ENCODE measurements at regions of chr17 and their contacts with region 1.

Region 1: GRCh38 chr17:40362696-40363110 is 1.8 kb downstream of the GJD3 start:
- DNase-seq: peak; percentile 68
- H3K4me3 ChIP-seq: peak overlapping the region in 2 of 3 experiments; percentile 53 to 55
- H3K27ac ChIP-seq: no peak overlapping the region
- H3K4me1 ChIP-seq: peaks cover 8% of the 10 kb centered on the region
- H3K27me3 ChIP-seq: no peaks in the 10 kb centered on the region
- CTCF ChIP-seq: peak; percentile 63 to 84

Region 2: GRCh38 chr17:38967290-38967738 is 1395.4 kb before region 1 on chr17 and contains the start of gene FBXO47:
- CTCF ChIA-PET with region 1: no interaction called
- dilution Hi-C with region 1: no loop called
- in situ Hi-C with region 1: no loop called
- intact Hi-C with region 1: no loop called
- DNase-seq: peak; percentile 82
- H3K4me3 ChIP-seq: peak within 1 kb of the TSS in 1 of 3 experiments; percentile 2
- H3K27ac ChIP-seq: no peak within 1 kb of the TSS
- H3K4me1 ChIP-seq: no peaks in the 10 kb centered on the region
- H3K27me3 ChIP-seq: no peaks in the 10 kb centered on the region
- CTCF ChIP-seq: no peak
- total RNA-seq, gene FBXO47: not detected

Region 3: GRCh38 chr17:40203131-40203530 is 159.6 kb before region 1 on chr17:
- CTCF ChIA-PET with region 1: no interaction called
- dilution Hi-C with region 1: no loop called
- in situ Hi-C with region 1: loop called in 1 of 2 experiments (anchors 10 kb)
- intact Hi-C with region 1: loop called (anchors 5 kb)
- DNase-seq: no peak
- H3K4me3 ChIP-seq: no peak overlapping the region
- H3K27ac ChIP-seq: no peak overlapping the region
- H3K4me1 ChIP-seq: no peaks in the 10 kb centered on the region
- H3K27me3 ChIP-seq: no peaks in the 10 kb centered on the region
- CTCF ChIP-seq: no peak

Region 4: DNA sequence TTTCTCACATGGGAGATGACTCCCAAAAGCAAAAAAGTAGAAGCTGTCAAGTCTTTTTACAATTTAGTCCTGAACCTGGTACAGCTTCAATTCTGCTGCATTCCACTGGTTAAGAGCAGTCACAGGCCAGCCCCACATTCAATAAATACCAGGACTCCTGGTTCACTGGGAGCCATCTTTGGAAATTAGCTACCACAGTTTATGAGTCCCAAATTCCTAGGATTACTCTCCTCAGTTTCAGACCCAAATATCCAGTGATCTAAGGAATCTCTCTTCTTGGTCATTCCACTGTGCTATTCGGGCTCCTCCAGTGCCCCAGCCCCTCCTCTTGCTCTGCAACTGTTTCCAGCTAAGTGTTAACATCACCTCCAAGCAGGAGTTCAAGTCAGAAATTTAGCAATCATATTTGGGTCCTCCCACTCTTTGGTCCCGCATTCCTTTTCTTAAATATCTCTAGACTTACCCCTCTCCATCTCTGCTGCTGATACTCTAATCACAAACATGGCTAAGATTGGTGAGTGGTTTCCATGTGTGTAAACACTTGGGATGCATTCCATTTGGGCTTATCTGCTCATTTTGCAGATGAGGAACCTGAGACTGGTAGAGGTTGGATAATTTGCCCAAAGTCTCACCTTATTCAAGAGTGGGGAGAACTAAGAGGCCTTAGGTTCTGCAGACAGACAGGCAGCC is 153.2 kb before region 1 on chr17:
- CTCF ChIA-PET with region 1: no interaction called
- dilution Hi-C with region 1: no loop called
- in situ Hi-C with region 1: loop called in 1 of 2 experiments (anchors 10 kb)
- intact Hi-C with region 1: loop called (anchors 5 kb)
- DNase-seq: no peak
- H3K4me3 ChIP-seq: no peak overlapping the region
- H3K27ac ChIP-seq: no peak overlapping the region
- H3K4me1 ChIP-seq: no peaks in the 10 kb centered on the region
- H3K27me3 ChIP-seq: no peaks in the 10 kb centered on the region
- CTCF ChIP-seq: no peak

Region 5: DNA sequence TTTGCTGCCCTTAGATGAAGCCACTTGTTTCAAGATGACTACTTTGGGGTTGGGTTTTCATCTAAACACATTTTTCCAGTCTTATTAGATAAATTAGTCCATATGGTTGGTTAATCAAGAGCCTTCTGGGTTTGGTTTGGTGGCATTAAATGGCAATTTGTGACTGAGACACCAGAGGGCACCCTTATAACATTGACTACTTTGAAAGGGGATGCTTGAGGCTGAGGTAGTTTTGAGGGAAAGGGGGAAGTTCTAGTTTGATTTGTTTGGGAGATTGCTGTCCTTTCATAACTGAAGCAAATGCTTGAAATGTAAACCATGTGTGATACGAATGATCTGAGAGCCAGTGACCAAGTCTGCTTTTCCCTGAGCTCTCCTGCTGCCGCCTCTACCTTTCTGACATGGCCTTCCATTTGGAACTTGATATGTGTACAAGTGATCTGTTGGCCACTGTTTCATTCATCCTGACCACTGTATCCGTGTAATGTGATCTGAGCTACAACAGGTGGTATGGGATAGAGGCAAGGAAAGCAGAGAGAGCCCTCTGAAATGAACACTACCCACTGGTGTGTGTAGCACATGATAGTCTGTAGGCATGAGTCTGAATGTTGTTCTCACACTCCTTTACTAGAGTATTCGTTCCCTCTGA is 59.6 kb before region 1 on chr17:
- CTCF ChIA-PET with region 1: no interaction called
- dilution Hi-C with region 1: loop called (anchors 5 kb)
- in situ Hi-C with region 1: no loop called
- intact Hi-C with region 1: no loop called
- DNase-seq: peak; percentile 45
- H3K4me3 ChIP-seq: no peak overlapping the region
- H3K27ac ChIP-seq: no peak overlapping the region
- H3K4me1 ChIP-seq: peaks cover 26% of the 10 kb centered on the region
- H3K27me3 ChIP-seq: no peaks in the 10 kb centered on the region
- CTCF ChIP-seq: peak; percentile 52 to 77

Region 6: DNA sequence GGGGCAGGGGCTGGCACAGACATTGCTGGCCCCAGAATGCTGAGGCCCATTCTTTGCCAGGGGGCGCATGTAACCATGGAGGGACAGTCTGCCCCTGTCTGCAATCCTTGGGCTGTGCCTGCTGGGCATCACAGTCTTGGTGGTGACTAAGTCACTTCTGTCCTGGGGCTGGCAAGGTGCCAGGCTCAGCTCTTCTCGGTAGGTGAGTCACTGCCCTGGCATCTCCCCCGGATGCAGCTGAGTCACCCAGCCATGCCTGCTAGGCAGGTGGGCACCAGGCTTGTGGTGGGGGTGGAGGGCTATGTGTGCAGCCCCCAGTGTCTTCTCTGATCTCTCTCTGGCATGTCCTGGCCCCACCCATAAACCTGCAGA is 48.1 kb before region 1 on chr17:
- CTCF ChIA-PET with region 1: no interaction called
- dilution Hi-C with region 1: no loop called
- in situ Hi-C with region 1: no loop called
- intact Hi-C with region 1: no loop called
- DNase-seq: peak; percentile 94
- H3K4me3 ChIP-seq: no peak overlapping the region
- H3K27ac ChIP-seq: no peak overlapping the region
- H3K4me1 ChIP-seq: peaks cover 77% of the 10 kb centered on the region
- H3K27me3 ChIP-seq: no peaks in the 10 kb centered on the region
- CTCF ChIP-seq: no peak

Region 7: DNA sequence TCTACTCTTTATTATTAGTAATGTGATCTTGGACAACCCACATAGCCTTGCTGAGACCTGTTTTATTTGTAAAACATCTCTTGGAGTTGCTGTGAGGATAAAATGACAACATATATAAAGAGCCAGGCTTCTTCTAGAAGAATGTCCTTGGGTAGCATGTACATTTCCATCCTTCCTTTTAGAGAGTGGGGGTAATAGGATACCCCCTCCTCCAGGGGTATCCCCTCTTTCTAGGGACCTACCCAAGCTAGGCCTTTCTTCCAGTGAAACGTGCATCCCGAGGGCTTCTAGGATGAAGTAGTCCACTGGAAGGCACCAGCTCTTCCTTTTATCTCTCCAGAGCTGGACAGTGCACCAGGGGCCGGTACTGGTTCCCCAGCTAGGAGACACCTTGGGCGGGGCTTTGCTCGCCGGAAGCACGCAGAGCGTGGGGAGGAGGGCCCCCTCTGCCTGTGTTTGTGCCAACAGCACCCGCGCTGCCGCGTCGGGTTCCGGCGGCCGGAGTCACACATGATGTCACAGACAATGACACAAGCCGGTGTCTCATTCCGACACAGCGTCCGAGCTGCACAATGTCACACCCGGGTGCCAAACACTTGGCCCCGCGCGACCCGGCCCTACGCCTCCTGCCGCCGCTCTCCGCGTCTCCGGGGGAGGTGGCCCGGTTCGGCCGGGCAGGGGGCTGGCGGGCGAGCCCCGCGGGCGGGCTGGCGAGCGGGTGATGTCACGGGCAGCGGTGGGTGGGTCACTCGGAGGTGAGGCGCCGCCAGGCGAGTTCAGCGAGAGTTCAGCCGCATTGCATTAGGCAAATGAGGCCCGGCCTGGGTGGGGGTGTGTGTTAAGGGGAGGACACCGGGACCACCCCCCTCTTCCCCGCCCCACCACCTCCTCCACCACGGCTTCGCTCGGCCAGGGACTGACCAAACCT is 21.6 kb before region 1 on chr17:
- CTCF ChIA-PET with region 1: no interaction called
- dilution Hi-C with region 1: no loop called
- in situ Hi-C with region 1: no loop called
- intact Hi-C with region 1: no loop called
- DNase-seq: peak; percentile 52
- H3K4me3 ChIP-seq: peak overlapping the region in 1 of 3 experiments; percentile 18
- H3K27ac ChIP-seq: no peak overlapping the region
- H3K4me1 ChIP-seq: peaks cover 52% of the 10 kb centered on the region
- H3K27me3 ChIP-seq: no peaks in the 10 kb centered on the region
- CTCF ChIP-seq: no peak

Region 8: GRCh38 chr17:40399185-40399584 is 36.5 kb after region 1 on chr17:
- CTCF ChIA-PET with region 1: no interaction called
- dilution Hi-C with region 1: no loop called
- in situ Hi-C with region 1: no loop called
- intact Hi-C with region 1: loop called (anchors 5 kb)
- DNase-seq: no peak
- H3K4me3 ChIP-seq: no peak overlapping the region
- H3K27ac ChIP-seq: no peak overlapping the region
- H3K4me1 ChIP-seq: no peaks in the 10 kb centered on the region
- H3K27me3 ChIP-seq: no peaks in the 10 kb centered on the region
- CTCF ChIP-seq: peak; percentile 39 to 53

Region 9: GRCh38 chr17:40417609-40418427 is 55.1 kb after region 1 on chr17 and contains the start of gene TOP2A:
- CTCF ChIA-PET with region 1: no interaction called
- dilution Hi-C with region 1: no loop called
- in situ Hi-C with region 1: loop called (anchors 5 kb)
- intact Hi-C with region 1: loop called (anchors 1 kb)
- DNase-seq: peak; percentile 100
- H3K4me3 ChIP-seq: peak within 1 kb of the TSS; percentile 81 to 98 (median 89)
- H3K27ac ChIP-seq: peak within 1 kb of the TSS; percentile 74
- H3K4me1 ChIP-seq: peaks cover 15% of the 10 kb centered on the region
- H3K27me3 ChIP-seq: no peaks in the 10 kb centered on the region
- CTCF ChIP-seq: no peak
- total RNA-seq, gene TOP2A: 3.2 to 93.3 TPM

Region 10: DNA sequence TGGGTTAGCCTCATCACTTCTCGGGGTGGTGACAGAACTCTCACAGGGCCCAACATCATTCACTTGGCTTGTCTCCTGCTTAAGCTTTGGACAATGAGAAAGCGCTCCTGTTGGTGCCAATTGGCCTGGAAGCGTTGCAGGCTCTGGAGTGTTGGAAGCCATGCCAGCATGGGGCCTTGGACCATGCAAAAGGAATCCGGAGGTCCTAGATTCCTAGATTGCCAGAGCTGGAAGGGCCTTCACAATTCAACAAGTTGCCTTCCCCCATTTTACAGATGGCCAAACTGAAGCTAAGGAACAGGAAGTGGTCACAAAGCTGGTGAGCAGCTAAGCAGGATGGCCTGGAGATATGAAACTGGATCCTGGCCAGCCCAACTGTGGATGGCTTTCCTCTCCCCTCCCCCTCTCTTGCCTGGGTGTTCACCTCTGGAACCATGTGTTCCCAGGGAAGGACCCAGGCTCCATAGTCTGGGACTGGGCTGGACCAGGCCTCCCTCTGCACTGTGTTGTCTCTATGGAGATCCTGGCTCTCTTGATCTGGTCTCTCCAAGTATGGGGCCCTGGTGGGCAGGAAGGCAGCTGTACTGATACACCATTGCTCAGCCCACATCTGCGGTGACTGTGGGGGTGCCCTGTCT is 74.5 kb after region 1 on chr17:
- CTCF ChIA-PET with region 1: no interaction called
- dilution Hi-C with region 1: loop called (anchors 5 kb)
- in situ Hi-C with region 1: no loop called
- intact Hi-C with region 1: no loop called
- DNase-seq: no peak
- H3K4me3 ChIP-seq: no peak overlapping the region
- H3K27ac ChIP-seq: no peak overlapping the region
- H3K4me1 ChIP-seq: peaks cover 5% of the 10 kb centered on the region
- H3K27me3 ChIP-seq: no peaks in the 10 kb centered on the region
- CTCF ChIP-seq: no peak

Region 11: DNA sequence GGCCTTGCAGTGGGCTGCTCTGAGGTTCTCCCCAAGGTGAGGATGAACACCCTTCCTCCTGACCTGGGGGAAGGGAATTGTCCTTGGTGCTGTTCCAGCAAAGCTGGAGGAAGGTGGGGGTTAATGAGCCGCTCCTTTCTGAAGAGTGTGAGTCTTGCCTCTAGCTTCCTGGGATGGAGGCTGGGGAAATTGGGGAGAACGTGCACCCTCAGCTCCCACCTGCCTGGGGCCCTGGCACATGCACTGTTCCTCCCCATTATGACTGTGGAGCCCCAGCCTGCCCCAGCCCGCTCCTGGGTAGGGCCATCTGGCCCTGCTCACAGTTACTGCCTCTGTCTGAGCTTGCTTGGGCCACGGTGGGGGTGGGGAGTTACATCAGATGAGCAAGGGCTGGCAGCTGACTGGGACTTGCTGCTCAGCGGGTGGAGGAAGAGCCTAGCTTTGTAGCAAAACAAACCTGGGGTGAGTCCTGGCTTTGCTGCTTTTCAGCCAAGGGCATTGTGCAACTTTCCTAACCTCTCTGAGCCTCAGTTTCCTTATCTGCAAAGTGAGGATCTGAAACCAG is 127.7 kb after region 1 on chr17:
- CTCF ChIA-PET with region 1: no interaction called
- dilution Hi-C with region 1: no loop called
- in situ Hi-C with region 1: no loop called
- intact Hi-C with region 1: no loop called
- DNase-seq: peak; percentile 85
- H3K4me3 ChIP-seq: no peak overlapping the region
- H3K27ac ChIP-seq: peak overlapping the region; percentile 96
- H3K4me1 ChIP-seq: peaks cover 97% of the 10 kb centered on the region
- H3K27me3 ChIP-seq: no peaks in the 10 kb centered on the region
- CTCF ChIP-seq: peak in 1 of 2 donors; percentile 1

Measured in mammary epithelial cell (primary cell).